ENCODE measurements at regions of chr19 and their contacts with region 1.

Region 1: DNA sequence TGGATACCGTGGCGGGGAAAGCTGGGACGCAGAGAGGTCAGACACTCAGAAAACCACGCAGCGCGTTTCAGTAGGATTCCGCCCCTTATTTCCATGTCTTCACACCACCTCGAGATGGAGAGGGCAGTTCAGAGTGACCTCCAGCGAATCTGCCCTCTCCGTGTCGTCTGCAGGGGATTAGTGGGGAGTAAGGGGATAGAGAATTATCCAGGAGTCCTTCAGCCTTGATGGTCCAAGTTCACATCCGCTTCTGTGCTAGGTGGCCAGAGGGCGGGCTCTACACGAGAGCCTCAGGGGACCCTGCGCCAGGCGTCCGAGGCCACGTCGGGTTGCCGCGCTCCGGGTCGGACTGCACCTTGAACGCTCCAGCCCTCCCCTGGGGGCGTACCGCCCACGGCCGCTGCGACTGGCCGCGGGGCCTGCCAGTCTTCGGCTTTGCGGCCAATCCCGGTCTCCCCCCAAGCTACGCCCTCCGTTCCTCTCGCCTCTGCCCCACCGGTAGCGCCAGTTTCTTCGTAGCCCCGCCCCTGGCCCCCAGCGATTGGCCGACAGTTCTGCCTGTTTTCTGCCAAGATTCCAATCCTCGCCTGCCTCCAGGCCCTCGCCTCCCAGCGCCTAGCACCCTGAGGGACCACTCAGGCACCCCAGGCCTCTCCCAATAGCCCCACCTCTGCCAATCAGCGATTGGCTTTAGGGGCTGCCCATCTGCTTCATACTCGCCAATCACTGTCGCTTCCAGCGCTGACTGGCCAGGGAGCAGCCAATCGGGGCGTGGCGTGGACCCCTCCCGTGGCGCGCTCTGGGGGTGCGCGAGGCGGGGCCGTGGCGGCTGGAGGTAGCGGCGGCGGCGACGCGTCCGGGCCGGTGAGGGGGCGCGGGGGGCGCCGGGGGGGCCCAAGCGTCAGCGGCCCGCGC is at the start of gene SLC25A42:
- DNase-seq: peak; percentile 99 to 100 (median 100)
- ATAC-seq: peak; percentile 93 to 97 (median 96)
- H3K4me3 ChIP-seq: peak within 1 kb of the TSS; percentile 51 to 95 (median 81)
- H3K27ac ChIP-seq: peak within 1 kb of the TSS; percentile 53 to 94 (median 84)
- H3K4me1 ChIP-seq: peaks cover 0 to 50% (median 37%) of the 10 kb centered on the region in 12 donors
- H3K27me3 ChIP-seq: no peaks in the 10 kb centered on the region
- CTCF ChIP-seq: no peak
- POLR2A ChIP-seq: peak in 1 of 2 donors; percentile 61
- total RNA-seq, gene SLC25A42: 15.7 to 28.0 (median 17.9) TPM

Region 2: GRCh38 chr19:19033426-19034203 is 29.8 kb before region 1 on chr19 and contains the starts of genes ARMC6 and SUGP2:
- intact Hi-C with region 1: loop called in 2 of 10 experiments (anchors 2 kb)
- DNase-seq: peak; percentile 87 to 93 (median 90)
- ATAC-seq: peak; percentile 56 to 90 (median 86)
- H3K4me3 ChIP-seq: peak within 1 kb of the TSS; percentile 59 to 97 (median 84)
- H3K27ac ChIP-seq: peak within 1 kb of the TSS; percentile 91 to 100 (median 98)
- H3K4me1 ChIP-seq: peaks cover 0 to 36% (median 22%) of the 10 kb centered on the region in 12 donors
- H3K27me3 ChIP-seq: no peaks in the 10 kb centered on the region
- CTCF ChIP-seq: peak in 1 of 12 donors; percentile 12
- POLR2A ChIP-seq: peak in 1 of 2 donors; percentile 69
- total RNA-seq, gene ARMC6: 9.9 to 23.6 (median 18.0) TPM
- total RNA-seq, gene SUGP2: 36.1 to 76.5 (median 59.4) TPM

Region 3: GRCh38 chr19:19105365-19106055 is 42.1 kb after region 1 on chr19:
- intact Hi-C with region 1: loop called in 1 of 10 experiments (anchors 5 kb)
- DNase-seq: peak in 4 of 5 donors; percentile 41 to 72 (median 60)
- ATAC-seq: peak in 3 of 4 donors; percentile 68 to 85 (median 68)
- H3K4me3 ChIP-seq: peak overlapping the region in 10 of 12 donors; percentile 11 to 55 (median 39)
- H3K27ac ChIP-seq: no peak overlapping the region
- H3K4me1 ChIP-seq: peaks cover 0 to 15% (median 4%) of the 10 kb centered on the region in 12 donors
- H3K27me3 ChIP-seq: no peaks in the 10 kb centered on the region
- CTCF ChIP-seq: no peak
- POLR2A ChIP-seq: no peak

Region 4: DNA sequence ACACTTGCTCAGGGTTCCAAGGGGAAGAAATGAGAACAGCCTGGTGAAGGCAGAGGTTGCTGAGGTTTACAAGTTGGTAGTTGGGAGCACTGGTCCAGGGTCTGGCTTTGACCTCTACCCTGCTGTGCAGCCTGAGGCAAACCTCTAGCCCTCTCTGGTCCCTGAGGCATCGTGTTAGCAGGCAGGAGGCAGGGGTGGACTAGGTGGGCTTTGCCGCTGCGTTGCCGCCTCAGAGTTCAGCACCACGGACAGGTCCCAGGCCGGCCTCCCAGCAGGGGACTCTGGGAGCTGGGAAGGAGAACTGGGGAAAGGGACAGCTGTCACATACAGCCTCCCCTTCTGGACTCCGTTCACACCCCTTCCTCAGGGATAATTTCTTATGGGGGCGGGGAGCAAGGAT is 151.5 kb after region 1 on chr19:
- intact Hi-C with region 1: no loop called
- DNase-seq: no peak
- ATAC-seq: peak in 3 of 4 donors; percentile 61 to 84 (median 72)
- H3K4me3 ChIP-seq: no peak overlapping the region
- H3K27ac ChIP-seq: no peak overlapping the region
- H3K4me1 ChIP-seq: no peaks in the 10 kb centered on the region
- H3K27me3 ChIP-seq: peaks cover 11 to 60% (median 35%) of the 10 kb centered on the region in 9 donors
- CTCF ChIP-seq: no peak
- POLR2A ChIP-seq: no peak

Measured in heart left ventricle (tissue), 16 donors.